CD14-positive monocyte (primary cell): ENCODE measurements at regions of chr1 and their contacts with region 1.

Region 1: GRCh38 chr1:19596714-19597495 is 47.2 kb upstream of the NBL1 start:
- DNase-seq: peak; percentile 99
- H3K4me3 ChIP-seq: peak overlapping the region; percentile 56 to 81 (median 69)
- H3K4me3 Mint-ChIP-seq: peak overlapping the region; percentile 98 to 100
- H3K27ac ChIP-seq: peak overlapping the region; percentile 94 to 95
- H3K27ac Mint-ChIP-seq: peak overlapping the region; percentile 98 to 100 (median 98)
- H3K4me1 ChIP-seq: peaks cover 20 to 28% of the 10 kb centered on the region in 2 donors
- H3K4me1 Mint-ChIP-seq: peaks cover 31% of the 10 kb centered on the region
- H3K27me3 ChIP-seq: no peaks in the 10 kb centered on the region
- H3K27me3 Mint-ChIP-seq: peaks cover 0 to 2% (median 1%) of the 10 kb centered on the region in 3 donors
- CTCF ChIP-seq: no peak

Region 2: GRCh38 chr1:19468397-19468956 is 128.4 kb before region 1 on chr1:
- intact Hi-C with region 1: loop called (anchors 5 kb)
- DNase-seq: peak; percentile 58 to 75 (median 72)
- H3K4me3 ChIP-seq: peak overlapping the region in 2 of 3 experiments; percentile 11 to 66
- H3K4me3 Mint-ChIP-seq: peak overlapping the region; percentile 66 to 87
- H3K27ac ChIP-seq: peak overlapping the region; percentile 94 to 95
- H3K27ac Mint-ChIP-seq: peak overlapping the region; percentile 96 to 99 (median 98)
- H3K4me1 ChIP-seq: peaks cover 58 to 77% of the 10 kb centered on the region in 2 donors
- H3K4me1 Mint-ChIP-seq: peaks cover 86% of the 10 kb centered on the region
- H3K27me3 ChIP-seq: no peaks in the 10 kb centered on the region
- H3K27me3 Mint-ChIP-seq: no peaks in the 10 kb centered on the region
- CTCF ChIP-seq: no peak

Region 3: GRCh38 chr1:19495799-19496624 is 100.9 kb before region 1 on chr1:
- intact Hi-C with region 1: no loop called
- DNase-seq: no peak
- H3K4me3 ChIP-seq: no peak overlapping the region
- H3K4me3 Mint-ChIP-seq: no peak overlapping the region
- H3K27ac ChIP-seq: no peak overlapping the region
- H3K27ac Mint-ChIP-seq: peak overlapping the region in 1 of 7 donors; percentile 20
- H3K4me1 ChIP-seq: peaks cover 5 to 7% of the 10 kb centered on the region in 2 donors
- H3K4me1 Mint-ChIP-seq: peaks cover 8% of the 10 kb centered on the region
- H3K27me3 ChIP-seq: no peaks in the 10 kb centered on the region
- H3K27me3 Mint-ChIP-seq: peaks cover 5 to 10% (median 8%) of the 10 kb centered on the region in 3 donors
- CTCF ChIP-seq: no peak